ENCODE measurements at regions of chr14 and their contacts with region 1.

Region 1: DNA sequence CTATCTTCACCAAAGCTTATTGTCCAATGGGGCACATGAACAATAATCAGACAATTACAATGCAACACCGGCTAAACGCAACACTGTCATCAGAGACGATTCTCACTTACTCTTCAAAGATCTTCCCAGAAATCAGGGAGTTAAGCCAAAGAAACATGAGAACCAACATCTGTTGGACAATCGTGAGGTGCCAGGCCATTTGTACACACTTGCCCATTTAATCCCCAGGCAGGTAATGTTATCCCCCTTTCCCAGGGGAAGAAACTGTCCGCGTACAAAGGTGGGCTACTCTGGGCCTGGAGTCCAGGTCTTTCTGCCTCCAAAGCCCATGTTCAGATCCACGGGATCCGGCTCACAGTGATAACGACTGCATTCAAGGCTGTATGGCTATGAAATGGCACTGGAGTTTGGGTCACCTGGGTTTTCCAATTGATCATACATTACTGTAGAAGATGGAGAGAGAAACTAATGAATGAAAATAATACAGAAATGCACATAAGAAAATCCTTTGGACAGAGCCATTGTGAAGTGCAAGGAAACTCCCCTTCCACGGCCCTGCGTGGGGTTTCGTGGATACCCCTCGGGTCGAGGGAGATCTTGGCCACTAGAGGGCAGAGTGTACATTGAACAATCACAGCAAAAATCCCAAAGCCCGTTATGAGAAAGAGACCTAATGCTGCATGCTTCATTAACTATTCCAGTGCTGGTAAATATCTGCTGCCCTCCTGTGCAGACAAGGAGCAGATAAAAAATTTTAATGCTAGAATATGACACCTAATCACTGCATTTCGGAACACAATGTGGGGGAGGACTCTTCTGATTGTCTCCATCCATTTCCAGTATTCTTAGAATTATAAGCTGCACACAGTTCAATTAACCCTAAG is 111.4 kb downstream of the EGLN3 start:
- DNase-seq: peak; percentile 91
- H3K4me3 ChIP-seq: no peak overlapping the region
- H3K27ac ChIP-seq: no peak overlapping the region
- H3K4me1 ChIP-seq: peaks cover 3 to 11% (median 7%) of the 10 kb centered on the region in 4 donors
- H3K27me3 ChIP-seq: no peaks in the 10 kb centered on the region
- CTCF ChIP-seq: peak; percentile 81 to 86 (median 84)
- EP300 ChIP-seq: no peak
- POLR2A ChIP-seq: no peak

Region 2: GRCh38 chr14:33891700-33892099 is 52.3 kb after region 1 on chr14:
- intact Hi-C with region 1: no loop called
- DNase-seq: no peak
- H3K4me3 ChIP-seq: no peak overlapping the region
- H3K27ac ChIP-seq: no peak overlapping the region
- H3K4me1 ChIP-seq: no peaks in the 10 kb centered on the region
- H3K27me3 ChIP-seq: no peaks in the 10 kb centered on the region
- CTCF ChIP-seq: no peak
- EP300 ChIP-seq: no peak
- POLR2A ChIP-seq: no peak

Region 3: DNA sequence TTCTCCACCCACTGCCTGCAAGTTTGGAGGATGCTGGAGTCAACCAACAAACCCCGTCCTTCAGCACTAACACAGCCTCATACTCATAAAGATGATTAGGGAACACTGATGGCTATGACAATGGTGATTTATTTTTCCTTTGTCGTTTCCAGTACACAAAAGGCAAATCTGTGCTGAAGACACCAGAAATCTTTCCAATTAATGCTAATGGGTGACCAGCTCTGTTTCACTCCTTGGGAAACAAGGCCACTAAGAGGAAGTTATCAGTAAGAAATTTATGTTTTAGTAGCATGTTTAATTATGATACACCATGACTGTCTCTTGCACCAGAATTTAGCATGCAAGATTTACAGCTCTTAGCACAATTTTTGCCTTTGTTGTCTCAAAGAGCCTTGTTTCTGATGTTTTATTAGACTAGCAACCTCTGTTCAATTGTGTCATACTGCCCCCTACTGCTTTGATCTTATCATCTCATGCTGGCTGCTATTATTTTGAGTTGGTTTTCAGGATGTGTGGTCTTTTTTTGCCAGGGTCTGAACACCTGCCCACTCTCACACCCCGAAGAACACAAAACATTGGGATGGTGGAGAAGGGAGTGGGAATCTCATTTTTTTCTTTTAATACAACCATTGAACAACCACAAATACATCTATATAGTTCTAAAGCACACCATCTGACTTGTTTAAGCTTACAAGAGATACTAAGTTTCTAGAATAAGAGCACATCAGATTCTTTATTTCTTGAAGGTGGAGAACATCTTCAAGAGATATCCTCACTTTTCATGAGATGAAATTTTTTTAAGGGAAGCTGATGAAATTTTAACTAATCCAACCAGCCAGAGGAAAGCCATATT is 461.7 kb after region 1 on chr14:
- intact Hi-C with region 1: loop called (anchors 2 kb)
- DNase-seq: no peak
- H3K4me3 ChIP-seq: no peak overlapping the region
- H3K27ac ChIP-seq: no peak overlapping the region
- H3K4me1 ChIP-seq: peaks cover 0 to 17% (median 6%) of the 10 kb centered on the region in 4 donors
- H3K27me3 ChIP-seq: no peaks in the 10 kb centered on the region
- CTCF ChIP-seq: peak; percentile 59 to 67 (median 60)
- EP300 ChIP-seq: no peak
- POLR2A ChIP-seq: no peak